A673 (cell line): ENCODE measurements at regions of chr15 and their contacts with region 1.

Region 1: GRCh38 chr15:98779463-98780071 is 131.2 kb downstream of the IGF1R start:
- DNase-seq: peak; percentile 87
- H3K4me3 ChIP-seq: no peak overlapping the region
- H3K27ac ChIP-seq: no peak overlapping the region
- H3K4me1 ChIP-seq: peaks cover 42% of the 10 kb centered on the region
- H3K27me3 ChIP-seq: no peaks in the 10 kb centered on the region
- CTCF ChIP-seq: peak; percentile 97

Region 2: DNA sequence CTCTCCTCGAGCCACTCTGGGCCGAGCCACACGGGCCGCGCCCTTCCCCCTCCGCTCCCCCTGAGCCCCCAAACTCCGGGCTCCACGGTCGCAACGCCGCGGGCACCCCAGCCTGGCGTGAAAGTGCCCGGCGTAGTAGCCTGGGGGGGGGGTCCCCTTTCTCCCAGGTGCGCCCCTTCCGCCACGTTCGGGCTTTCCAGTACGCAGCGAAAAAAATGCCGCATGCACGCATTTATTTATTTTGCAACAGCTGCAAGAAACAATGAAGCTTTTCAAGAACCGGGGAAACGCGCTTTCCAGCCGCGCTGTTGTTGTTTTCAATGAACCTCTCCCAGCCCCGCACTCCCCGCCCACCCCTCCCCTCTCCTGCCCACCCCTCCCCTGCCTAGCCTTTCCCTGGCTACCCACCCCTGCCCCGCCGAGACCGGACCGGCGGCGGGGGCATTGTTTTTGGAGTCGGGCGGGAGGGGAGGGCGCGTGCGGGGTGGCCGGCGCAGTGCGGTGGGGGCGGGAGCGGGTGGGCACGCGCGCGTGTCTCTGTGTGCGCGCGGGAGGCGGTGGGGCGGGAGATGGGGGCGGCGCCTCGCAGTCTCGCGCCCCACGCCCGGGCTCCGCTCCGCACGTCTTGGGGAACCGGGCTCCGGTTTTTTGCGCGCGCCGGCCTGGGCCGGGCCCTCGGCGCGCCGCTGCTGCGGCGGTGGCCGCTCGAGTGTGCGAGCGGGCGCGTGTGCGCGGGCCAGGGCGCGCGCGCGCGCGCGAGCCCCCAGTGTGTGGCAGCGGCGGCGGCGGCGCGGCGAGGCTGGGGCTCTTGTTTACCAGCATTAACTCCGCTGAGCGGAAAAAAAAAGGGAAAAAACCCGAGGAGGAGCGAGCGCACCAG is 131.6 kb before region 1 on chr15 and contains the start of gene IGF1R:
- CTCF ChIA-PET with region 1: no interaction called
- POLR2A ChIA-PET with region 1: no interaction called
- intact Hi-C with region 1: loop called (anchors 5 kb)
- DNase-seq: peak; percentile 96
- H3K4me3 ChIP-seq: peak within 1 kb of the TSS; percentile 87
- H3K27ac ChIP-seq: peak within 1 kb of the TSS; percentile 88
- H3K4me1 ChIP-seq: peaks cover 14% of the 10 kb centered on the region
- H3K27me3 ChIP-seq: peaks cover 35% of the 10 kb centered on the region
- CTCF ChIP-seq: 0 out of 2 replicates have a peak, but pooled peaks have one; percentile 15
- total RNA-seq, gene IGF1R: 34.9 and 41.2 TPM in 2 replicates

Region 3: DNA sequence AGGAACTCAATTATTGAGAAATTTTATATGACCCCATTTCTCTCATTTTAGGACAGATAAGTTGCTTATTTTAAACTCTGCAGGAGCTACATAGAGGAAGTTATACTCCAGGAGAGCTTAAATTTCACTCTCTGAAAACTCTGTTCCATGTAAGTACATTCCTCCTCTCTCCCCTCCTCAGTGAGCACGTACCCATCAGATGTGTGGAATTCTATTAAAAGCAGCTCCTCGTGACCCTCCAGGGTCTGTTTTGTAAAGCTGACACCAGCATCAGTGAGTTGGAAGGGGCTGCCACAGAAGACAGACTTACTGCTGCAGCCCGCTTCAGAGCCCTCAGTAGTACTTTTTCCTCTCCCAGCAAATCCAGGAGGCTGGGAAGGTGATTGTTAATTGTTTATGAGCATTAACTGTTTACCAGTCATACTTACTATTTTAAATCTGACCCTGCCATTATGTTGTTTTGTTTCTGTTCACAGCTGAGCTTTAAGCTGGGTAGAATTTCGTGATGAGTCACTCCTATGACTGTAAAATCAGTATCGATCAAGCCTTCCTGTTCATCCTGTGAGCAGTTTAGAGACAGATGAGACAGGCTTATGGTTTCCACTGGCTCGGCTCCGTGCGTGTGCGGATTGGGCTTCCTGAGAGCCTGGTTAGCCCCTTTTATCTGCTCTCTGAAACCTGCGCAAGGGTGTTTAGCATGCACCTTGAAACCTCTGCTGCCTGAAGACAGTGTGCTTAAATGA is 110.8 kb before region 1 on chr15:
- CTCF ChIA-PET with region 1: no interaction called
- POLR2A ChIA-PET with region 1: no interaction called
- intact Hi-C with region 1: no loop called
- DNase-seq: no peak
- H3K4me3 ChIP-seq: no peak overlapping the region
- H3K27ac ChIP-seq: no peak overlapping the region
- H3K4me1 ChIP-seq: peaks cover 15% of the 10 kb centered on the region
- H3K27me3 ChIP-seq: no peaks in the 10 kb centered on the region
- CTCF ChIP-seq: no peak

Region 4: DNA sequence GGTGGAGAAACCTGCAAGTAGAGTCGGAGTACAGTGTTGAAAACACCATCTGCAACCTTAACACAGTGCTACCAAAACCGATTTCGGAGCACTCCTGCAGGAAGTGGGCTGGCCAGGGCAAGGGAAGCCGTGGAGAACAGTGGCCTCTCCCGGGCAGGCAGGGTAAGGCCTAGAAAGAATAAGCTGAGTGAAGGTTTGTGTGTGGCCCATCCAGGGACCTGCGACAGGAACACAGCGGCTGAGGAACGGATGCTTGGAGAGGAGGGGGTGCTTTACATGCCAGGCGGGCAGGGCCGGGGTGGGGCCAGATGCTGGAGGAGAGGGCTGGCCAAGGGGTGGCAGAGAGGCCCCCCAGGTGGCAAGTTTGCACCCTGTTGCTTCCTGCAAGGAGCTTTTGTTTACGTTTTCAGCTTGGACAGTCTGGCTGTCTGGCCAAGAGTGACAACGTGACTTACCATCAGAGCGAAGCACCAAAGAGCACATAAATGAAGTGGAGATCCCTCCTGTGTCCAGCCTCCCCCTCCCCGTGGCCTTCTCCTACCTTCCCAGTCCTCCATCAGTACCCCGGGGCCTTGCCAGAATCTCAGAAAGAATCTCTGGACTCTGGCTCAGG is 71.5 kb after region 1 on chr15:
- CTCF ChIA-PET with region 1: interaction called, 12 read pairs
- POLR2A ChIA-PET with region 1: no interaction called
- intact Hi-C with region 1: no loop called
- DNase-seq: peak; percentile 89
- H3K4me3 ChIP-seq: peak overlapping the region; percentile 59
- H3K27ac ChIP-seq: no peak overlapping the region
- H3K4me1 ChIP-seq: peaks cover 29% of the 10 kb centered on the region
- H3K27me3 ChIP-seq: no peaks in the 10 kb centered on the region
- CTCF ChIP-seq: peak; percentile 88

Region 5: DNA sequence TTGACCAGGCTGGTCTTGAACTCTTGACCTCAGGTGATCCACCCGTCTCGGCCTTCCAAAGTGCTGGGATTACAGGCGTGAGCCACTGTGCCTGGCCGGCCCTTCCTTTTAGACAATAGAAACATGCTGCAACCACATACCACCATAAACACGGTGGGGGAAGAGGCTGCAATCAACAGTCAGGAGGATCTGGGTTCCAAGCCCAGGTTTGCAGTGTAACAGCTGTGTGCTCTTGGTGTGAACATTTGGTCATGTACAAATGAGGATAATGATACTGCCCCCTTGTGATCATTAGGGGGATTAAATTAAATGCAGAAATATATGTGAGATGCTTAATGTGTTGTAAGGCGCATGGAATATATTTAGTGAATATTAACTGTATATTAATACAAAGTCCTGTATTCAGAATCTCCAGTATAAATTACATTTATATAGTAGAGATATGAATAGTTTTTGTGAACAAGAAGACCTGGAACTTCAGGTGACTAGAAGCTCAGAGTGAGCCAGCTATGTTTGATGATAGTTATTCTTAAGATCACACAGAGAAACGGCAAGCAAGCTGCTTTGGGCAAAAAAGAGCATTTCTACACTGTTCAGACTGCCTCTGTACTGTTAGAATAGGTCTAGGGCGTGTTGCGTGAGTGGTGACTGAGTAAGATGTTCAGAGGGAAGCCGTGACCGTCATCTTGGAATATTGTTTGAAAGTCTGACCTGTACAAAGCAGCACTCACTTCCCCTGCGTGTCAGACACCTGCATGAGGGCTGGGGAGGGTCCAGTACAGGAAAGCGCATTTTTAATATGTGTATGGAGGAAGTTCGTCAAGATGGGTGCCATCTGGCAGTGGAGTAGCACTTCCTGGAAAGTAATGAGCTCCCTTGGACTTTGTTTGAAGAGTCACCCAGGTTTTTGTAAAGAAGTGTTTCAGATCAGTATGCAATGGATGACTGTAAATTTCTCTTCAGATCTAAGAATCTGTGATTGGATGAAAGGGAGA is 102.3 kb after region 1 on chr15:
- CTCF ChIA-PET with region 1: interaction called, 3 read pairs
- POLR2A ChIA-PET with region 1: no interaction called
- intact Hi-C with region 1: loop called (anchors 1 kb)
- DNase-seq: peak; percentile 85
- H3K4me3 ChIP-seq: no peak overlapping the region
- H3K27ac ChIP-seq: no peak overlapping the region
- H3K4me1 ChIP-seq: peaks cover 4% of the 10 kb centered on the region
- H3K27me3 ChIP-seq: no peaks in the 10 kb centered on the region
- CTCF ChIP-seq: peak; percentile 71

Region 6: GRCh38 chr15:98904544-98904943 is 125.0 kb after region 1 on chr15:
- CTCF ChIA-PET with region 1: no interaction called
- POLR2A ChIA-PET with region 1: no interaction called
- intact Hi-C with region 1: loop called (anchors 1 kb)
- DNase-seq: peak; percentile 73
- H3K4me3 ChIP-seq: no peak overlapping the region
- H3K27ac ChIP-seq: no peak overlapping the region
- H3K4me1 ChIP-seq: no peaks in the 10 kb centered on the region
- H3K27me3 ChIP-seq: no peaks in the 10 kb centered on the region
- CTCF ChIP-seq: peak; percentile 81

Region 7: DNA sequence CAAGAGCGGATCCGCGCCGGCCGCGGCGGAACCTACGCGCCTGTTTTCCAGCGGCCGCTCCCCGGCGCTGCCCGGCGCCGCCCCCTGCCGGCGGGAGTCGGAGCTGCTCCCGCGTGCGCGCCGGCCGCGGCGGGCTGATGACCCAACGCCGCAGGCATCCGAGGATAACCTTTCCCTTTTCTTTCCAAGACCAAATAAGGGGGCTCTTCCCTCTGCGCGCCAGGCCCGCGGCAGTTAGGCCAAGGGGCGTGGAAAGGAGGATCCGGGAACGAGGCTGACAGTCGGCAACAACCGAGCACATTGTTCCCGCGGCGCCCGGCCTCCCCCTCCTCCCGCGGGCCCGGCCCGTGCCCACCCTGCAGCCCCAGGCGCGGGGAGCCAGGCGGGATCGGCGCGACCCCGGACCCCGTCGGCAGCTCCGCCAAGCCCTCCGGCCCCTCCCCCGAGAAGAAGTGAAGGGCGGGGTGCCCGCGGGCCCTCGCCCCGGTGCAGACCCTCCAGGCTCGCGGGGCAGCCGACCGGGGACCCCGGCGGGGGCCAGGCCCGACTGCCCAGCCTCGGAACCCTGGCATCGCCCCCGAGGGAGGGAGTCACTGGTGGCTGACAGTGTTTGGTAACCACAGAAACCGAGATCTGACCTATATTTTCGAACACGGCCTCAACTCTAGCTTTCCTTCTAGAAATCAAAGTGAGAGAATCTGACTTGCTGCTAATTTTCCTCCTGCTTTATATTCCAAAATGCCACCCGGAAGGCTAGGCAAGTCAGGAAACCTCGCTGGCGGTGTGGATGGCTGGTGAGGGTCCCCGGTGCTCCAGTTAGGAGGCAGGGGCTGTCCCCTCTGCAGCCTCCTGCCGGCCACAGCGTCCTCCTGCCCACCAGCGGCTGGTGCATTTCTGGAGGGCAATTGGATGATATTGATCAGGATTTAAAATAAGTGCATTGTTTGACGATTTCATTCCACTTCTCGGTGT is 279.7 kb after region 1 on chr15:
- CTCF ChIA-PET with region 1: no interaction called
- POLR2A ChIA-PET with region 1: no interaction called
- intact Hi-C with region 1: loop called (anchors 10 kb)
- DNase-seq: peak; percentile 80
- H3K4me3 ChIP-seq: peak overlapping the region; percentile 70
- H3K27ac ChIP-seq: peak overlapping the region; percentile 50
- H3K4me1 ChIP-seq: no peaks in the 10 kb centered on the region
- H3K27me3 ChIP-seq: no peaks in the 10 kb centered on the region
- CTCF ChIP-seq: peak; percentile 55